Esophagus muscularis mucosa (tissue), 4 donors: ENCODE measurements at regions of chr6 and their contacts with region 1.

Region 1: GRCh38 chr6:26532699-26533531 is 5.3 kb upstream of the HMGN4 start:
- DNase-seq: peak; percentile 99
- H3K4me3 ChIP-seq: peak overlapping the region; percentile 62 to 77 (median 70)
- H3K27ac ChIP-seq: peak overlapping the region; percentile 85 to 87 (median 86)
- H3K4me1 ChIP-seq: peaks cover 23 to 32% (median 26%) of the 10 kb centered on the region in 4 donors
- H3K27me3 ChIP-seq: no peaks in the 10 kb centered on the region
- CTCF ChIP-seq: no peak
- EP300 ChIP-seq: no peak
- POLR2A ChIP-seq: no peak

Region 2: DNA sequence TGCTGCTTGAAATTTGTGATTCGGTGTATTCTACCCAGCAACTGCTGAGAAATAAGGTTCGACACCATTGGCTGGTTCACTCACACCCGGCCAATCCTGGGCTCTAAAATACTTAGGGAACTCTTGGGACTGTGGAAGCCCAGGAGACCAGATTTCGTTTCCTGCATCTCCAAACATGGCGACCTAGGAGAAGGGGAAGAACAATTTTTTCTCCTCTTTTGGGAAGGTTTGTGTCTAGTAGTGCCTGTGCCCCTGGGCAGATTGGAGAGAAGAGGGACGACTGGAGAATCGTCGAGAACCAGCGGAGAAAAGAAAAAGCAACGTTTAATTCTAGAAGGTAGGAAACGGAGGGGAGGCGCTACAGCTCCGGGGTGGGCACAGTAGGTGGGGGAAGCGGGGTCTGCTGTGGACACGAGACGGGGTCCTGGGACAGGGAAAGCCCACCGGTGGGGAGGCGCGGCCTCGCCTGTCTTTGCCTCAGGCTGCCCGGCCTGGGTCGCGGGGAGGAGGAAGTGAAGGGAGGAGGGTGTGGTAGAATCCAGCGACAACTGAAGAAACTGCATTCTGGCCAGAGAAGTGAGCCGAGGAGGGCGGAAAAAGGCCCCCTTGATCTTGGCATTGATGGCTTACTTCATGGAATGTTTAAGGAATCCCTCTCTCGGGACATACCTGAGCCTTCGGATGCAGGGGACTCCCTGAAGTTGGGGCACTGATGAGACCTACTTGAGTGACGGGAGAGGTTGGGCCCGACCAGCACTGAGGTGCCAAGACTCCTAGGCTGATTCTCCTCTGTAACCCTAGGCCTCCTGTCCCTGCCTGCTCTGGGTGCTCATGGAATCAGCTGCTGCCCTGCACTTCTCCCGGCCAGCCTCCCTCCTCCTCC is 74.9 kb before region 1 on chr6 and contains the start of gene BTN2A1:
- intact Hi-C with region 1: loop called (anchors 5 kb)
- DNase-seq: peak; percentile 95
- H3K4me3 ChIP-seq: peak within 1 kb of the TSS; percentile 81 to 95 (median 90)
- H3K27ac ChIP-seq: peak within 1 kb of the TSS; percentile 93 to 96 (median 94)
- H3K4me1 ChIP-seq: peaks cover 37 to 59% (median 53%) of the 10 kb centered on the region in 4 donors
- H3K27me3 ChIP-seq: no peaks in the 10 kb centered on the region
- CTCF ChIP-seq: no peak
- EP300 ChIP-seq: no peak
- POLR2A ChIP-seq: no peak
- total RNA-seq, gene BTN2A1: 17.9 to 22.9 (median 21.4) TPM

Region 3: DNA sequence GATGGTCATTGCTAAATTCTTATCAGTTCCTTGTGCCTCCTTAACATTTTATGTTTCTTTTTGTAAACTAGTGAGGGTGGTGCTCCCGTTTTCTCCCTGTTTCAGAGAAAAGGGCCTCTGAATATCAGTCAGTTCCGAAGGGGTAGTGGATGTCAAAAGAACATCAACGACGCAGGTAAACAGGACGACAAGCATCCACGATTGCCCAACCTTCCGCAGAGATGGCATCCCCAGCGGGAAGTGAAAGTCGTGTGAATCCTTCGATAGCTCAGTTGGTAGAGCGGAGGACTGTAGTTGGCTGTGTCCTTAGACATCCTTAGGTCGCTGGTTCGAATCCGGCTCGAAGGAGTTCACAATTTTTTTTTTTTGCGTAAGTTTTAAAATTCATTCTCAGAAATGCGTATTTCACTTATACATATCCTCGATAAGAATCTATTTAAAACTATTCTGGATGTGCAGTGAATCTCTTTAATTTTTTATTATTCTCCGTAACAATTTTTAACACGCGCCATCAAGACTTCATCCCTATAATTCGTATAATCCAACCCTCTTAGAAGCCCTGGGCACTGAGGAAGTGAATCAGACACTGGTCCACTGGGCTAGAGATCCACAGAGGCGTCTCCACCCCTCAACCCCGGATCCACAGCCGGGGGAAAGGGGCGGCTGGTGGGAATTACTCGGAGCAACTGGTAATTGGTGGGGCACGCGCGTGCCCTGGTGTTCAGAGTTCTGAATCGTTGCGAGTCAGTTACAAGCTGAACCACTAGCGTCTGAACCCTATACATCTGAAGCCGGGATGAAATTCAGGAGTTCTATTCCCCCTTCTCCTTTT is 35.9 kb after region 1 on chr6:
- intact Hi-C with region 1: loop called (anchors 5 kb)
- DNase-seq: peak; percentile 100
- H3K4me3 ChIP-seq: peak overlapping the region; percentile 52 to 62 (median 58)
- H3K27ac ChIP-seq: peak overlapping the region; percentile 46 to 74 (median 62)
- H3K4me1 ChIP-seq: peaks cover 6 to 22% (median 20%) of the 10 kb centered on the region in 4 donors
- H3K27me3 ChIP-seq: no peaks in the 10 kb centered on the region
- CTCF ChIP-seq: peak; percentile 8 to 30 (median 12)
- EP300 ChIP-seq: no peak
- POLR2A ChIP-seq: no peak

Region 4: DNA sequence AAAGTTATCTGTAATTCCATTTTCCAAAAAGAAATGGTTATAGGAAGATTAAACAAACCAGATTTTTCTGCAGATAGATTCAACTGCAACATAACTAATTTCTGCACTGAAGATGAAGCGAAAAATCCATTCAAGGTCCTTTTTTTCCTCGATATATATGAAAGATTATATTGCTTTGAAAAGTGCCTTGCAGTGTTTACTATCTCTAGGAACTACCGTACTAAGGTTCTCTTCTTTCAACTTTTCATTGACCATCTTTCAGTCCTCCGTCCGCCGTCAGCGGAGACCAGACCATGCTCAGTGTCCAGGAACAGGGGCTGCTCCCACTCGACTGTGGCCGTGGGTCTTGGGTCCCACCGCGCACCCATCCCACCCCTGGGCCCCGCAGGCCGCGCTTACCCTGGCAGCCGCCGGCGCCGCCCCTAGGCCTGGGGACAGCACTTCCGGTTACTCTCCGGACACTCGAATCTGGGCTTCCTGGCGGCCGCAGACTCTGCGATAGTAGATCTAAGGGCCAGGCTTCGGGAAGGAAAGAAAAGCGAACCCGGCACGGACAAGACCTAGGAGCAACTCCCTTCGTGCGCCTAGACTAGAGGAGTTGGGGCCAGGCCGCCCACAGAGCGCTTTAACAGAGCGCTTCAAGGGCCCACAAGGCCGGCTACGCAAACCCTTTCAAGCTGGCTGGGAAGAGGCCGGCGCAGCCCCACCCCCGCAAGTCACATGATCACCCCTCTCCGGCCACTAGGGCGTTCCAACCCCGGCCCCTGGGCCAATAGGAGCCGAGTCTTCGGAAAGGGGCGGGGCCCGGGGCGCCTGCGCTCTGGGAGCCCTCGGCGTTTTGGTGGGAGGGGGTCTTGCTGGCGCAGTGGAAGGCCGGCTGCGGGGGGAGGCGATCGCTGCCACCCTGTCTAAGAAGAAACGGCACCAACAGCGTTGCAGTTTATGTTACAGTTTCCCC is 126.4 kb after region 1 on chr6 and contains the start of gene ZNF322:
- intact Hi-C with region 1: no loop called
- DNase-seq: peak; percentile 99
- H3K4me3 ChIP-seq: peak within 1 kb of the TSS; percentile 62 to 84 (median 79)
- H3K27ac ChIP-seq: peak within 1 kb of the TSS; percentile 73 to 89 (median 86)
- H3K4me1 ChIP-seq: peaks cover 27 to 44% (median 30%) of the 10 kb centered on the region in 4 donors
- H3K27me3 ChIP-seq: peaks cover 0 to 9% (median 0%) of the 10 kb centered on the region in 4 donors
- CTCF ChIP-seq: peak in 1 of 3 experiments; percentile 6
- EP300 ChIP-seq: no peak
- POLR2A ChIP-seq: peak; percentile 15
- total RNA-seq, gene ZNF322: 14.7 to 22.9 (median 17.4) TPM